Common myeloid progenitor, CD34-positive (primary cell): ENCODE measurements at regions of chr13 and their contacts with region 1.

Region 1: GRCh38 chr13:49517461-49517860 is 21.7 kb downstream of the PHF11 start:
- DNase-seq: no peak
- H3K4me3 ChIP-seq: no peak overlapping the region
- H3K27ac ChIP-seq: no peak overlapping the region
- H3K4me1 ChIP-seq: peaks cover 0 to 4% (median 0%) of the 10 kb centered on the region in 4 experiments
- H3K27me3 ChIP-seq: no peaks in the 10 kb centered on the region

Region 2: DNA sequence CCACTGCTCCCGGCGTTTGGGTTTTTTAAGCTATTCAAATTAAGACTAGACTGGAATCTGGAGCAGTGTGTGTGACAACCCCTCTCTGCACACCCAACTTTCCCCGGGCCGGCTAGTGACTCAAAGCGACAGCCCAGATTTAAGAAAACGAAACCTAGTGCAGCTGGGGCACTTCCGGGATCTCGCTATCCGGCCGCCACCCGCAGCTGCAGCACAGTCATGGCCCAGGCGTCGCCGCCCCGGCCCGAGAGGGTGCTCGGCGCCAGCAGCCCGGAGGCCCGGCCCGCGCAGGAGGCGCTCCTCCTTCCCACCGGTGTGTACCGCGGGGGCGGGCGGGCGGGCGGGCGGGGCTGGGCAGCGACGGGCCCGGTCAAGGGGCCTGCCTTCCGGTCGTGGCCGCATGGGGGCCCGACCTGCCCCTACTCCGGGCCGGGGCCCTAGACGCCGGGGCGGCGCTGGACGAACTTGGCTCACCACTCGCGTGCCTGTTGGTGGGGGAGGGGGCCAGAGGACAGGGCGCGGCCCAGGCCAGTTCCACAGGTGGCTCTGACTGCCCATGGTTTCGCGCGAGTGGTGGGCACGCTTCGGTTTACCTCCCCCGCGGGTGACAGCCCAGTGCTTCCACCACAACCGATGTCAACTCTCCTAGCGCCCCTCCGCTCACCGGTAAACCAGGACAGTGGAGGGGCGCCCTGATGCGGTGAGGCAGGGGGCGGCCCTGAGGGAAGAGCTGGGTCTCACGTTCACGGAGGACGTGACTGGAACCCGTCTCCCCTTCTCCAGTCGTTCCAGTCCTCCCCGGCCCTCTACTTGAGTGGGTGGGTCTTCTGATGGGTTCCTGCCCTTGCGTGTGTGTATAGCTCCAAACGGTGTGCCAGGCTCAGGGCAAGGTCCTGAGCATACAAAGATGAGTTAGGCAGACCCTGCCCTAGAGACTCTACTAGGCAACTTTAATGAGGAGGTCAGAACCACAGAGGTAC is 21.4 kb before region 1 on chr13 and contains the start of gene PHF11:
- CTCF ChIA-PET with region 1: interaction called, 11 read pairs
- POLR2A ChIA-PET with region 1: interaction called, 3 read pairs
- DNase-seq: peak; percentile 88 to 96 (median 95)
- H3K4me3 ChIP-seq: peak within 1 kb of the TSS; percentile 36 to 92 (median 76)
- H3K27ac ChIP-seq: peak within 1 kb of the TSS; percentile 21 to 75
- H3K4me1 ChIP-seq: peaks cover 2 to 25% (median 16%) of the 10 kb centered on the region in 4 experiments
- H3K27me3 ChIP-seq: no peaks in the 10 kb centered on the region